PC-3 (cell line): ENCODE measurements at regions of chr3 and their contacts with region 1.

Region 1: DNA sequence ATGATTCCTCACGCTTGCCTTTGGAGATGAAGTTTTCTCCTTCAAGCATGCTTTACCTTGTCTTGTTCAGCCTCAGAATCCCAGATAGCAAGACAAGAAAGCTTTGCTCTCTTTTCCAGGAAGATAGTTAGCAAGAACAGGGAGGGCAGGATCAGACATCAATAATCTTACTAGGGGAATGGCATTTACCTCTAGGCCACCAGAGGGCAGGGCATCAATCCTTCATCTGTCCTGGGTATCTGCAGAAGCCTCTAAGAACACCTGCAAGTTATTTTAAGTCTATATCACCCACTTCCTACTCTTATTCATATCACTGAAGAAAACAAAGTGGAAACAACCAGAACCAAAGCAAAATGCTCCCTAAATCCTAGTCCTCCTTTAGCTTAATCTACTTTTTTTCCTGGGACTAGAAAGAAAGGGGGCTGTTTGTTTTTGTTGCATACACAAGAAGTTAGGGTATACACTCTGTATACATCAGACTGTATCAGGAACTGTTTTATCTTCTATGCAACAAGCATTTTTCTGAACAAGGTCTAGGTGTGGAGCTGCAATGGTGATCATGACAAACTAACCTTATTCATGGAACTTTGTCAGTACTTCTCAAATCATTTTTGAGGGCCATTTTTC is 862.5 kb downstream of the CADM2 start:
- DNase-seq: peak; percentile 69
- ATAC-seq: peak; percentile 99
- H3K4me3 ChIP-seq: no peak overlapping the region
- H3K27ac ChIP-seq: no peak overlapping the region
- H3K4me1 ChIP-seq: no peaks in the 10 kb centered on the region
- H3K27me3 ChIP-seq: peaks cover 24% of the 10 kb centered on the region
- CTCF ChIP-seq: peak; percentile 87

Region 2: GRCh38 chr3:85875589-85875988 is 54.3 kb after region 1 on chr3:
- CTCF ChIA-PET with region 1: no interaction called
- POLR2A ChIA-PET with region 1: no interaction called
- intact Hi-C with region 1: loop called (anchors 5 kb)
- DNase-seq: no peak
- ATAC-seq: peak; percentile 40
- H3K4me3 ChIP-seq: no peak overlapping the region
- H3K27ac ChIP-seq: no peak overlapping the region
- H3K4me1 ChIP-seq: no peaks in the 10 kb centered on the region
- H3K27me3 ChIP-seq: no peaks in the 10 kb centered on the region
- CTCF ChIP-seq: no peak

Region 3: DNA sequence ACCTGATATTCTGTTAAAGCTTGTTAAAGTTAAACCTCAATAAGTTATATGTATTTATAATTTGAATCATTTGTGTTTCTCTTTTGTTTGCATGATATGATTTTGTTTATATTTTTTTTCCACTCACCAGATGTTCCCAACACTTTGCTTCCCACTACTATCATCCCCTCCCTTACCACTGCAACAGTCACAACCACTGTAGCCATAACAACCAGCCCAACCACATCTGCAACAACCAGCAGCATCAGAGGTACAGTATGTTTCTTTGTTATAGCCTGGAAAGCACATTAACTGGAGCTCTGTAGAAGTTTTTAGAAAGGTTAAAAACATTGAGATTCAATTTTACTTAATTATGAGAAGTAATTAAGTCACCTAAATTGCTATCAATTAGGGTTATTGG is 157.8 kb after region 1 on chr3:
- CTCF ChIA-PET with region 1: no interaction called
- POLR2A ChIA-PET with region 1: no interaction called
- intact Hi-C with region 1: no loop called
- DNase-seq: no peak
- ATAC-seq: no peak
- H3K4me3 ChIP-seq: no peak overlapping the region
- H3K27ac ChIP-seq: no peak overlapping the region
- H3K4me1 ChIP-seq: no peaks in the 10 kb centered on the region
- H3K27me3 ChIP-seq: peaks cover 11% of the 10 kb centered on the region; the same call in 1 of the 2 replicates
- CTCF ChIP-seq: no peak

Region 4: GRCh38 chr3:86037916-86038315 is 216.7 kb after region 1 on chr3:
- CTCF ChIA-PET with region 1: no interaction called
- POLR2A ChIA-PET with region 1: no interaction called
- intact Hi-C with region 1: loop called (anchors 10 kb)
- DNase-seq: no peak
- ATAC-seq: no peak
- H3K4me3 ChIP-seq: no peak overlapping the region
- H3K27ac ChIP-seq: no peak overlapping the region
- H3K4me1 ChIP-seq: no peaks in the 10 kb centered on the region; the same call in 1 of the 2 replicates
- H3K27me3 ChIP-seq: no peaks in the 10 kb centered on the region
- CTCF ChIP-seq: no peak

Region 5: GRCh38 chr3:86245360-86245759 is 424.1 kb after region 1 on chr3:
- CTCF ChIA-PET with region 1: no interaction called
- POLR2A ChIA-PET with region 1: no interaction called
- intact Hi-C with region 1: loop called (anchors 1 kb)
- DNase-seq: peak; percentile 42
- ATAC-seq: peak; percentile 71
- H3K4me3 ChIP-seq: no peak overlapping the region
- H3K27ac ChIP-seq: no peak overlapping the region
- H3K4me1 ChIP-seq: 0 out of 2 replicates have a peak, but pooled peaks cover 3% of the 10 kb centered on the region
- H3K27me3 ChIP-seq: no peaks in the 10 kb centered on the region
- CTCF ChIP-seq: peak; percentile 63